ENCODE measurements at regions of chr9 and their contacts with region 1.

Region 1: GRCh38 chr9:128117613-128118471 is 9.7 kb downstream of the PTGES2 start:
- DNase-seq: peak; percentile 82 to 99 (median 92)
- ATAC-seq: peak; percentile 97
- H3K4me3 ChIP-seq: no peak overlapping the region
- H3K4me3 Mint-ChIP-seq: peak overlapping the region in 4 of 10 donors; percentile 3 to 59 (median 36)
- H3K27ac ChIP-seq: no peak overlapping the region
- H3K27ac Mint-ChIP-seq: peak overlapping the region in 8 of 9 donors; percentile 11 to 88 (median 60)
- H3K4me1 ChIP-seq: peaks cover 0 to 7% of the 10 kb centered on the region in 2 donors
- H3K4me1 Mint-ChIP-seq: peaks cover 6 to 13% (median 7%) of the 10 kb centered on the region in 7 donors
- H3K27me3 ChIP-seq: no peaks in the 10 kb centered on the region
- H3K27me3 Mint-ChIP-seq: no peaks in the 10 kb centered on the region

Region 2: GRCh38 chr9:127785023-127785932 is 332.6 kb before region 1 on chr9:
- CTCF ChIA-PET with region 1: no interaction called
- POLR2A ChIA-PET with region 1: no interaction called
- intact Hi-C with region 1: no loop called
- DNase-seq: peak; percentile 82 to 93 (median 90)
- ATAC-seq: peak; percentile 65
- H3K4me3 ChIP-seq: peak overlapping the region; percentile 53
- H3K4me3 Mint-ChIP-seq: peak overlapping the region; percentile 82 to 95 (median 92)
- H3K27ac ChIP-seq: peak overlapping the region; percentile 90
- H3K27ac Mint-ChIP-seq: peak overlapping the region; percentile 91 to 98 (median 96)
- H3K4me1 ChIP-seq: peaks cover 56 to 59% of the 10 kb centered on the region in 2 donors
- H3K4me1 Mint-ChIP-seq: peaks cover 34 to 75% (median 61%) of the 10 kb centered on the region in 7 donors
- H3K27me3 ChIP-seq: no peaks in the 10 kb centered on the region
- H3K27me3 Mint-ChIP-seq: no peaks in the 10 kb centered on the region

Region 3: GRCh38 chr9:128094166-128094967 is 23.5 kb before region 1 on chr9:
- CTCF ChIA-PET with region 1: interaction called, 5 read pairs
- POLR2A ChIA-PET with region 1: interaction called, 5 read pairs
- intact Hi-C with region 1: loop called in 1 of 2 experiments (anchors 2 kb)
- DNase-seq: peak; percentile 38 to 85 (median 71)
- ATAC-seq: peak; percentile 83
- H3K4me3 ChIP-seq: no peak overlapping the region
- H3K4me3 Mint-ChIP-seq: peak overlapping the region; percentile 39 to 83 (median 72)
- H3K27ac ChIP-seq: peak overlapping the region; percentile 71
- H3K27ac Mint-ChIP-seq: peak overlapping the region; percentile 86 to 99 (median 96)
- H3K4me1 ChIP-seq: peaks cover 18 to 72% of the 10 kb centered on the region in 2 donors
- H3K4me1 Mint-ChIP-seq: peaks cover 50 to 85% (median 72%) of the 10 kb centered on the region in 7 donors
- H3K27me3 ChIP-seq: no peaks in the 10 kb centered on the region
- H3K27me3 Mint-ChIP-seq: no peaks in the 10 kb centered on the region